ENCODE measurements at regions of chr1 and their contacts with region 1.

Region 1: DNA sequence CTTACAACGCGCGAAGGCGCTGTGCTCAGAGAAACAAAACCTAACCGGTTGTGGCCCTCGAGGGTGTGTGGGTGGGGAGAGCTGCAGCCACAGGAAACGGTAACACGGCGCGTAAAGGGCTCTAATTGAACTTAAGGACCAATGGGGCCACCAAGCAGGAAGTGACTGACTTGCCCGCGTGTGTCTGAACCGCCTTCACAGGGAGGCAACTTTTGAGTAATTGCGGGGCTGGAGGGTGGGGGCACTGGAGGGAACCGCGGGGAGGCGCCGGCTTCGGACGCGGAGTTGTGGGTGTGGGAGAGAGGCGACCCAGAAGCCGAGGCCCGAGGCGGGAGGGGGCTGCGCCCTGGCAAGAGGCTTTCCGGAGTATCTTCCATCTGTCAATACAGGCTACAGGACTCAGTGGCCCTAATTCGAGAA is 577 bp upstream of the PNRC2 start:
- DNase-seq: peak; percentile 83 to 84
- H3K4me3 ChIP-seq: peak overlapping the region; percentile 69 to 89 (median 85)
- H3K27ac ChIP-seq: peak overlapping the region; percentile 98 to 100
- H3K4me1 ChIP-seq: no peaks in the 10 kb centered on the region
- H3K27me3 ChIP-seq: no peaks in the 10 kb centered on the region
- CTCF ChIP-seq: no peak
- POLR2A ChIP-seq: no peak

Region 2: GRCh38 chr1:23691499-23692307 is 267.3 kb before region 1 on chr1 and contains the start of gene RPL11:
- intact Hi-C with region 1: no loop called
- DNase-seq: peak; percentile 94
- H3K4me3 ChIP-seq: peak within 1 kb of the TSS; percentile 65 to 94 (median 79)
- H3K27ac ChIP-seq: peak within 1 kb of the TSS; percentile 85 to 90
- H3K4me1 ChIP-seq: peaks cover 0 to 18% of the 10 kb centered on the region in 2 donors
- H3K27me3 ChIP-seq: no peaks in the 10 kb centered on the region
- CTCF ChIP-seq: peak; percentile 69 to 90 (median 86)
- POLR2A ChIP-seq: peak; percentile 84
- total RNA-seq, gene RPL11: 1,191 to 1,487 (median 1,340) TPM

Region 3: GRCh38 chr1:24027838-24028468 is 68.9 kb after region 1 on chr1:
- intact Hi-C with region 1: loop called (anchors 10 kb)
- DNase-seq: no peak
- H3K4me3 ChIP-seq: no peak overlapping the region
- H3K27ac ChIP-seq: no peak overlapping the region
- H3K4me1 ChIP-seq: no peaks in the 10 kb centered on the region
- H3K27me3 ChIP-seq: no peaks in the 10 kb centered on the region
- CTCF ChIP-seq: peak in 2 of 3 donors; percentile 47 to 60
- POLR2A ChIP-seq: no peak

Measured in breast epithelium (tissue), 4 donors.